Caki2 (cell line): ENCODE measurements at regions of chr12 and their contacts with region 1.

Region 1: GRCh38 chr12:79566473-79567174 is 124.1 kb downstream of the PAWR start:
- DNase-seq: peak; percentile 64

Region 2: DNA sequence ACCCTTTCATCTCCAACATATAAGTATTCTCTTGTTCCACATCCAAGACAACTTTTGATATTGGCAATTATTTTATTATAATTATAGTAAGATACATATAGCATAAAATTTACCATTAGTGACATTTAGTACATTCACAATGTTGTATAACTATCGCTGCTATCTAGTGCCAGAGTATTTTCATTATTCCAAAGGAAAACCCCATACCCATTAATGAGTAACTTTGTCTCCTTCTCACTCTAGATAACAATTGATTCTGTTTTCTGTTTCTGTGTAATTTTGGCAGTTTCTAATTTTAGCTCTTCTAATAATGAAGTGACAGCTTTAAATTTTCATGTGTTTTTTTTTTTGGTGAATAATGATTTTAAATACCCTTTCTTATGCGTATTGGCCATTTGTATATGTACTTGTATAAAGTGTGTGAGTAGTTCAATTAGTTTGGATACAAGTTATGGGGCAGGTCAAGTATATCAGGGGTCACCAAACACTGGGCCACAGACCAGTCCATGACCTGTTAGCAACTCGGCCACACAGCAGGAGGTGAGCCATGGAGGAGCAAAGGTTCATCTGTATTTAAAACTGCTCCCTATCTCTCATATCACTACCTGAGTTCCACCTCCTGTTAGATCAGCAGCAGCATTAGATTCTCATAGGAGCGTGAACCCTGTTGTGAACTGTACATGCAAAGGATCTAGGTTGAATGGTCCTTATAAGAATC is 799.2 kb before region 1 on chr12:
- in situ Hi-C with region 1: no loop called
- DNase-seq: peak; percentile 18

Region 3: GRCh38 chr12:79482323-79482722 is 84.3 kb before region 1 on chr12:
- in situ Hi-C with region 1: no loop called
- DNase-seq: no peak

Region 4: GRCh38 chr12:79503281-79503680 is 63.3 kb before region 1 on chr12:
- in situ Hi-C with region 1: no loop called
- DNase-seq: peak; percentile 52

Region 5: GRCh38 chr12:79615596-79616560 is 49.3 kb after region 1 on chr12:
- in situ Hi-C with region 1: loop called (anchors 5 kb)
- DNase-seq: no peak